ENCODE measurements at regions of chr1 and their contacts with region 1.

Region 1: GRCh38 chr1:87386217-87386790 is 57.6 kb downstream of the LMO4 start:
- DNase-seq: no peak
- H3K4me3 ChIP-seq: no peak overlapping the region
- H3K27ac ChIP-seq: no peak overlapping the region
- H3K4me1 ChIP-seq: no peaks in the 10 kb centered on the region
- H3K27me3 ChIP-seq: no peaks in the 10 kb centered on the region
- CTCF ChIP-seq: no peak
- POLR2A ChIP-seq: no peak

Region 2: GRCh38 chr1:87292684-87293493 is 93.4 kb before region 1 on chr1:
- intact Hi-C with region 1: no loop called
- DNase-seq: peak; percentile 37 to 68
- H3K4me3 ChIP-seq: no peak overlapping the region
- H3K27ac ChIP-seq: no peak overlapping the region
- H3K4me1 ChIP-seq: no peaks in the 10 kb centered on the region
- H3K27me3 ChIP-seq: no peaks in the 10 kb centered on the region
- CTCF ChIP-seq: peak; percentile 67 to 80 (median 70)
- POLR2A ChIP-seq: no peak

Region 3: GRCh38 chr1:87305762-87306161 is 80.5 kb before region 1 on chr1:
- intact Hi-C with region 1: no loop called
- DNase-seq: no peak
- H3K4me3 ChIP-seq: no peak overlapping the region
- H3K27ac ChIP-seq: peak overlapping the region in 1 of 2 donors; percentile 30
- H3K4me1 ChIP-seq: peaks cover 0 to 4% of the 10 kb centered on the region in 2 donors
- H3K27me3 ChIP-seq: no peaks in the 10 kb centered on the region
- CTCF ChIP-seq: no peak
- POLR2A ChIP-seq: no peak

Region 4: DNA sequence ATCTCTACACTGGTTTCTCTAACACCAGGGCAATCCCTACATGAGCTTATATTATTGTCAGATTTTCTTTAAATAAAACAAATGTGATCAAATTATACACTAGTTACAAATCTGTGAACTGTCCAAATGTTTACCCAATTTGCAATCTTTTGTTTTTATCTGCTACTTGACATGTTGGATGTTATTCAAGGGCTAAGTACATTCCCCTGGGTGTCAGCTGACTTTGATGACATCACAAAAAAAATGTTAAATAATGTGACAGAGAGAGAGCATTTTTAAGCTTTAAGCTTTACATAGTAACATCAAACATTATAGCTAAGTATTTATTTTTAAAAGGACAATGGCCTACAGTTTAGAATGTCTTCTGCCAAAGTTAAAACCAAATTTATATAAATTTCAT is 866.4 kb after region 1 on chr1:
- intact Hi-C with region 1: loop called (anchors 5 kb)
- DNase-seq: no peak
- H3K4me3 ChIP-seq: no peak overlapping the region
- H3K27ac ChIP-seq: no peak overlapping the region
- H3K4me1 ChIP-seq: no peaks in the 10 kb centered on the region
- H3K27me3 ChIP-seq: no peaks in the 10 kb centered on the region
- CTCF ChIP-seq: no peak
- POLR2A ChIP-seq: no peak